Activated CD4-positive, alpha-beta memory T cell treated with anti-CD3 and anti-CD28 coated beads, Interleukin-2, amount 10 ng/mL, durations not matched to agents 7 days and 5 days (primary cell): ENCODE measurements at regions of chr5 and their contacts with region 1.

Region 1: GRCh38 chr5:149141224-149141956 is at the start of gene ABLIM3:
- DNase-seq: peak; percentile 75
- H3K4me3 Mint-ChIP-seq: peak within 1 kb of the TSS; percentile 28
- H3K27ac Mint-ChIP-seq: no peak within 1 kb of the TSS
- H3K4me1 Mint-ChIP-seq: peaks cover 3% of the 10 kb centered on the region
- H3K27me3 Mint-ChIP-seq: peaks cover 34% of the 10 kb centered on the region
- total RNA-seq, gene ABLIM3: 0.08 to 0.38 TPM

Region 2: DNA sequence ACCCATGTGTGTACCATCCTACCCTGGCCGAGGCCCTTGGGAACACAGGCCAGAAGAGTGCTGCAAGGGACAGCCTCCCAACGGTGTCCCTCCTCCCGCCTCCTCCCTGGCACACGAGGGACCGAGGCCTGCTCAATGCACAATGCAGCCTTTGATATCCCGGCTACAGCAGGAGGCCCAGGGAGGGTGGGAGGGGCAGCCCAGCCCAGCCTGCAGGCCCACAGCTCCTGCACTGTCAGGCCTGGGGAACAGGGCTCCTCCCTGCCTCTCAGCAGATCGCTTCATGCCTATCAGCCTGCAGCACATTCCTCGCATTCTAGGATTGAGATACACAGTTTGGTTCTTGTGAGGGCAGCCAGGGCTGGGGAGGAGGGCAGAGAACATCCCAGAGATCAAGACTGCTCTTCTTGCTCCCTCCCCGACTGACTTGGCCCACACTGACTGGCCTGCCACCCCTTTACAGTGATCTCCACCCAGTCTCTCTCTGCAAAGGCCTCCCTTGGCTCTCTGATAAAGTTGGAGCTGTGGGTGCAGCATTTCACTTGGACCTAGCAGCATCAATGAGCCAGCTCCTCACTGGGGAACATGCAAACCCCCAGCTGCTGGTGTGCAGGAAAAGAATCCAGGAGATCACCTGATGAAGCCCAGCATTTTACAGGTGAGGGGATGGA is 78.2 kb before region 1 on chr5 and contains the start of gene SH3TC2:
- CTCF ChIA-PET with region 1: no interaction called
- POLR2A ChIA-PET with region 1: no interaction called
- DNase-seq: no peak
- H3K4me3 Mint-ChIP-seq: no peak within 1 kb of the TSS
- H3K27ac Mint-ChIP-seq: no peak within 1 kb of the TSS
- H3K4me1 Mint-ChIP-seq: peaks cover 4% of the 10 kb centered on the region
- H3K27me3 Mint-ChIP-seq: peaks cover 11% of the 10 kb centered on the region
- total RNA-seq, gene SH3TC2: not detected

Region 3: DNA sequence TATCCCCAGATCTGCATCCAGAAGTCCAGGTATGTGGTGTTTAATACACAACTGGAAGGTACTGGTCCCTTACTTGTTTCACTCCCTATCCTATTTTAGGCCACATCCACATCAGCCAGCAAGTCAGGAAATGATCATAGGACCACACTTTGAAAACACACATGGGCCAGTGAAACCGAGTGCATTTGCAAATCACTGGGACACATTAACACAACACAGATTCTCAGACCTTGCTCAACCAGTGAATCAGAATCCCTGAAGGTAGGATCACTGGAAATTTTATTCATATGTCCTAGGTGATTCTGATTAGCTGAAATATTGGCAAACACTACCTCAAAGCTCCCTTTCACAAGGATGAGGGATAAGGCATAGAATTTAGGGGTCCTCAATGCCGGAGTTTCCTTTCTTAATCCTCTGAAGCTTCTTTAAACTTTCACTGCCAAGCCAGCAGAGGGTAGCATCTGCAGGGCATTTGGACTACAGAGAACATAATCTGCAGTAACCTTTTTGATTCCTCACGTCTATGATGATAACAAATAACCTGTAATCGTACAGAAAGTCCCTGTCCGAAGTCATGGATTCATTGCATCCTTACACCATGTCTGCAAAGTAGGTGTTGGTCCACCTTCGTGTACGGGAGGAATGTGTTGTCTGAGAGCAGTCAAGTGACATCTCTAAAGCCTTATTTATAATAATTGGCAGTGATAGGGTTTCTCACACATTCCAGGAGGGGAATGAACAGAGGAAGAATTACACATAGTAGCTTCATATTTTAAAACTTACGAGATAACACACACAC is 11.1 kb before region 1 on chr5:
- CTCF ChIA-PET with region 1: interaction called, 11 read pairs
- POLR2A ChIA-PET with region 1: no interaction called
- DNase-seq: no peak
- H3K4me3 Mint-ChIP-seq: no peak overlapping the region
- H3K27ac Mint-ChIP-seq: no peak overlapping the region
- H3K4me1 Mint-ChIP-seq: no peaks in the 10 kb centered on the region
- H3K27me3 Mint-ChIP-seq: peaks cover 26% of the 10 kb centered on the region